GM12878 (cell line): ENCODE measurements at regions of chr1 and their contacts with region 1.

Region 1: DNA sequence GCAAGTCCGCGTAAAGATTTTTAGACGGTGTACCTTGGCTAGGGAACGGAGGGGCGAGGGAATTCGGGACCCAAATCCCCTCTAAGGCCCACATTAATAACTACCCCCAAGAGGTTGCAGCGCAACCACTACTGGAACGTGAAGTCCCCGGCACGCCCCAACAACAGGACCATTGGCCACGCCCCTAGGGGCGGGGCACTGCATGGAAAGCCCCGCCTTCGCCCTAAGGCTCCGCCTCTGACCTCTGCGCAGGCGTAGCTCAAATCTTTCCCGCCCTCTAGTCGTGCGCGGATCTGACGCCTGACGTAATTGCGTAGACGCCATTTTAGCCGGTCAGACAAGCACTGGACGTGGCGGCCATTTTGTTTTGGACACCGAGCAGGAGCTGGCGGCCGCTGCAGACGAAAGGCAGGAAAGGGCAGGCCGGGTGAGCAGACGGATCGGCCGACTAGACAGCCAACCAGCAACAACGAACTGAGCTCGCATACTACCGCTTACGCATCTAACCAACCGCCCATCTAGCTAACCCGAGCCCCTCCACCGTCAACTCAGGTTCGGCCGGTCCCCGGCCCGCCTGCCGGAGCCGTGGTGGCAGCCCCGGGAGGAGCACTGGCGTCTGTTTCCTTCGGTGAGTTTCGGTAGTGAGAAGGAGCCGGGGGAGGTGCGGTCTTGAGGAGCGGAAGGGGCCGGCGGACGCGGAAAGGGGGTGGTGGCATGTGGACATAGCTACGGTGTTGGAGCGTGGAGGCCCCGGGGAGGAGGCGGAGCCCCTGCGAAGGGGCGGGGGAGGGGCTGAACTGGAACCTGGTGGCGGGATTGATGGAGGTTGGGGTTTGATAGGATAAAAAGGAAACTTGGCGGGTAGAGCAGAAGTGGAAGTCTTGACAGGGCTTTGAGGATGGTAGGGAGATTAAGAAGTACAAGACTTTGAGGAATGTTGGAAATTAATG is at the start of gene CHTOP:
- DNase-seq: peak; percentile 95
- ATAC-seq: peak; percentile 96
- H3K4me3 ChIP-seq: peak within 1 kb of the TSS; percentile 89
- H3K27ac ChIP-seq: peak within 1 kb of the TSS; percentile 98
- H3K4me1 ChIP-seq: peaks cover 6% of the 10 kb centered on the region
- H3K27me3 ChIP-seq: no peaks in the 10 kb centered on the region
- CTCF ChIP-seq: no peak
- EP300 ChIP-seq: no peak
- POLR2A ChIP-seq: peak; percentile 98
- RAD21 ChIP-seq: no peak
- polyA plus RNA-seq, gene CHTOP: 8.4 to 15.9 TPM

Region 2: GRCh38 chr1:153598309-153599172 is 35.5 kb before region 1 on chr1:
- CTCF ChIA-PET with region 1: interaction called, 5 read pairs
- POLR2A ChIA-PET with region 1: interaction called, 15 read pairs
- RAD21 ChIA-PET with region 1: interaction called, 4 read pairs
- SMC1A ChIA-PET with region 1: interaction called, 6 read pairs
- in situ Hi-C with region 1: no loop called
- intact Hi-C with region 1: no loop called
- DNase-seq: peak; percentile 88
- ATAC-seq: peak; percentile 99
- H3K4me3 ChIP-seq: no peak overlapping the region
- H3K27ac ChIP-seq: peak overlapping the region; percentile 97
- H3K4me1 ChIP-seq: peaks cover 22% of the 10 kb centered on the region
- H3K27me3 ChIP-seq: no peaks in the 10 kb centered on the region
- CTCF ChIP-seq: no peak
- EP300 ChIP-seq: peak; percentile 56 to 64; a peak in 3 of 4 replicates
- POLR2A ChIP-seq: peak; percentile 76
- RAD21 ChIP-seq: 0 out of 2 replicates have a peak, but pooled peaks have one; percentile 13

Region 3: GRCh38 chr1:153646672-153647374 is 12.8 kb after region 1 on chr1:
- CTCF ChIA-PET with region 1: interaction called, 3 read pairs
- POLR2A ChIA-PET with region 1: interaction called, 35 read pairs
- RAD21 ChIA-PET with region 1: interaction called, 4 read pairs
- SMC1A ChIA-PET with region 1: interaction called, 13 read pairs
- in situ Hi-C with region 1: no loop called
- intact Hi-C with region 1: no loop called
- DNase-seq: no peak
- ATAC-seq: no peak
- H3K4me3 ChIP-seq: no peak overlapping the region
- H3K27ac ChIP-seq: no peak overlapping the region
- H3K4me1 ChIP-seq: no peaks in the 10 kb centered on the region
- H3K27me3 ChIP-seq: no peaks in the 10 kb centered on the region
- CTCF ChIP-seq: no peak
- EP300 ChIP-seq: no peak
- POLR2A ChIP-seq: no peak
- RAD21 ChIP-seq: no peak